K562 (cell line): ENCODE measurements at regions of chr7 and their contacts with region 1.

Region 1: DNA sequence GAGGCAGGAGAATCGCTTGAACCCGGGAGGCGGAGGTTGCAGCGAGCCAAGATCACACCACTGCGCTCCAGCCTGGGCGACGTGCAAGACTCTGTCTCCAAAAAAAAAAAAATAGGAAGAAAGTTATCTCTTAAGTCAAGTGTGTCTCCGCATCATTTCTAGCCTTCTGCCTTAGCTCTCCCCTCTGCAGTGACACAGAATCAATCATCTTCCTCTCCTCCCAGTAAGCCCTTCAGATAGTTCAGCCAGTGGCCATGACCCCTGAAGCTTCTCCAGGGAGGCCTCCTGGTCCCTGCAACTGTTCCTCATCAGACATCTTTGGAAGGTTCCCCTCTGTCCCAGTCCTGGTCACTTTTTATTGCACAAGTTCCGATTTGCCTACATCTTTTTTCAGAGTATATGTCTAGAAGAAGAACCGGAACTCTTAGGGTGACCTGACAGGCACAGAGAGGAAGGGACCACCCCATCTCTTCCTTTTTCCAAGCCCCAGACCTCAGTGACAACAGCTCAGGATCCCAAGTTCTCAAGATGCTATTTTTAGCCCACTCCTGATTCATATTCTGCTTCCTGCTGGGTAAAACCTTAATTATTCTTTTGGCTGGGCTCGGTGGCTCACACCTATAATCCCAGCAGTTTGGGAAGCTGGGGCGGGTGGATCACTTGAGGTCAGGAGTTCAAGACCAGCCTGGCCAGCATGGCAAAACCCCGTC is 6.6 kb upstream of the RHBDD2 start:
- DNase-seq: peak in 2 of 4 experiments; percentile 52 to 57
- ATAC-seq: peak; percentile 65
- H3K4me3 ChIP-seq: no peak overlapping the region
- H3K27ac ChIP-seq: no peak overlapping the region
- H3K4me1 ChIP-seq: peaks cover 12 to 14% of the 10 kb centered on the region in 2 experiments; a peak in 4 of 5 replicates
- H3K27me3 ChIP-seq: no peaks in the 10 kb centered on the region
- CTCF ChIP-seq: no peak
- EP300 ChIP-seq: no peak
- POLR2A ChIP-seq: no peak
- RAD21 ChIP-seq: no peak

Region 2: DNA sequence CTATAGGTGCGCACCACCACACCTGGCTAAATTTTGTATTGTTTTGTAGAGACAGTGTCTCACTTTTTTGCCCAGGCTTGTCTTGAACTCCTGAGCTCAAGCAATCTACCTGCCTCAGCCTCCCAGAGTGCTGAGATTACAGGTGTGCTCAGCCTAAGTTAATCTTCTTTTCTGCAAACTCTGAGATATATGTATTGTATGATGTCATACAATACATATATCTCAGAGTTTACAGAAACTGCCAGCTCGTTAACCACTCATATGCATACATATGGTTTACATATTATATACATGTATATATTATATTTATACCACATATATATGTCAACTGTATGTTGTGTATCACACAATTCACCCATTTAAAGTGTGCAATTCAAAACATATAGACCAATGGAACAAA is 142.3 kb after region 1 on chr7:
- CTCF ChIA-PET with region 1: interaction called, 95 read pairs
- POLR2A ChIA-PET with region 1: interaction called, 4 read pairs
- in situ Hi-C with region 1: no loop called
- intact Hi-C with region 1: loop called (anchors 2 kb)
- DNase-seq: no peak
- ATAC-seq: no peak
- H3K4me3 ChIP-seq: no peak overlapping the region
- H3K27ac ChIP-seq: no peak overlapping the region
- H3K4me1 ChIP-seq: peaks cover 0 to 3% of the 10 kb centered on the region in 2 experiments; a peak in 1 of 5 replicates
- H3K27me3 ChIP-seq: no peaks in the 10 kb centered on the region
- CTCF ChIP-seq: no peak
- EP300 ChIP-seq: no peak
- POLR2A ChIP-seq: no peak
- RAD21 ChIP-seq: no peak